ENCODE measurements at regions of chr11 and their contacts with region 1.

Region 1: GRCh38 chr11:3854977-3855807 is at the start of gene STIM1:
- DNase-seq: peak; percentile 95 to 98 (median 97)
- H3K4me3 ChIP-seq: peak within 1 kb of the TSS; percentile 84
- H3K4me3 Mint-ChIP-seq: peak within 1 kb of the TSS; percentile 91 to 99 (median 93)
- H3K27ac ChIP-seq: peak within 1 kb of the TSS; percentile 86
- H3K27ac Mint-ChIP-seq: peak within 1 kb of the TSS; percentile 98 to 100 (median 99)
- H3K4me1 ChIP-seq: peaks cover 58% of the 10 kb centered on the region
- H3K4me1 Mint-ChIP-seq: peaks cover 63 to 68% (median 66%) of the 10 kb centered on the region in 3 donors
- H3K27me3 ChIP-seq: no peaks in the 10 kb centered on the region
- H3K27me3 Mint-ChIP-seq: peaks cover 0 to 3% of the 10 kb centered on the region in 2 donors
- total RNA-seq, gene STIM1: 45.6 to 46.0 TPM

Region 2: GRCh38 chr11:3626308-3626951 is 228.8 kb before region 1 on chr11:
- CTCF ChIA-PET with region 1: no interaction called
- POLR2A ChIA-PET with region 1: no interaction called
- DNase-seq: no peak
- H3K4me3 ChIP-seq: no peak overlapping the region
- H3K4me3 Mint-ChIP-seq: no peak overlapping the region
- H3K27ac ChIP-seq: no peak overlapping the region
- H3K27ac Mint-ChIP-seq: no peak overlapping the region
- H3K4me1 ChIP-seq: no peaks in the 10 kb centered on the region
- H3K4me1 Mint-ChIP-seq: no peaks in the 10 kb centered on the region
- H3K27me3 ChIP-seq: no peaks in the 10 kb centered on the region
- H3K27me3 Mint-ChIP-seq: peaks cover 0 to 1% of the 10 kb centered on the region in 2 donors

Region 3: DNA sequence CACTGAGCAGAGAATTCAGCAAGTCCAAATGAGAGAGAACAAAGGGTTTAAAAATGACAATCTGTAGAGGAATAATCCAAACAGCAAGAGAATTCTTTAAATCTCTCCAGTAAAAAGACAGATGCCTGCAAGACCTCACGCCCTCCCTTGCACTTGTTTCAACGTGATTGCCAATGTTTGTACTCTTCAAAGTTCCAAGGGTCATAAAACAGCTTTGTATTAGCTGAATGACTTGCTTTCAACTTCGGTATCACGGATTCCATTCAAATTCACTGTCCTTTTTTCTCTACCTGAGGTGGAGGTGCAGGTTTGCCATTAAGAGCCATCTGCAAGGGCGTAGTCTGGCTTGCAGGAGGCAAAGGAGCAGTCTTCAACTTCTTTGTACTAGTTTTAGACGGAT is 142.9 kb before region 1 on chr11:
- CTCF ChIA-PET with region 1: no interaction called
- POLR2A ChIA-PET with region 1: no interaction called
- DNase-seq: no peak
- H3K4me3 ChIP-seq: no peak overlapping the region
- H3K4me3 Mint-ChIP-seq: no peak overlapping the region
- H3K27ac ChIP-seq: no peak overlapping the region
- H3K27ac Mint-ChIP-seq: peak overlapping the region in 4 of 8 donors; percentile 17 to 61 (median 42)
- H3K4me1 ChIP-seq: no peaks in the 10 kb centered on the region
- H3K4me1 Mint-ChIP-seq: peaks cover 0 to 5% (median 4%) of the 10 kb centered on the region in 3 donors
- H3K27me3 ChIP-seq: no peaks in the 10 kb centered on the region
- H3K27me3 Mint-ChIP-seq: no peaks in the 10 kb centered on the region

Region 4: GRCh38 chr11:3747684-3748083 is 107.5 kb before region 1 on chr11:
- CTCF ChIA-PET with region 1: no interaction called
- POLR2A ChIA-PET with region 1: no interaction called
- DNase-seq: no peak
- H3K4me3 ChIP-seq: no peak overlapping the region
- H3K4me3 Mint-ChIP-seq: no peak overlapping the region
- H3K27ac ChIP-seq: no peak overlapping the region
- H3K27ac Mint-ChIP-seq: peak overlapping the region in 3 of 8 donors; percentile 20 to 70 (median 50)
- H3K4me1 ChIP-seq: no peaks in the 10 kb centered on the region
- H3K4me1 Mint-ChIP-seq: peaks cover 0 to 2% (median 0%) of the 10 kb centered on the region in 3 donors
- H3K27me3 ChIP-seq: no peaks in the 10 kb centered on the region
- H3K27me3 Mint-ChIP-seq: no peaks in the 10 kb centered on the region

Region 5: GRCh38 chr11:3807909-3808860 is 47.0 kb before region 1 on chr11 and contains the start of gene PGAP2:
- CTCF ChIA-PET with region 1: interaction called, 31 read pairs
- POLR2A ChIA-PET with region 1: interaction called, 9 read pairs
- DNase-seq: peak; percentile 45 to 71 (median 54)
- H3K4me3 ChIP-seq: peak within 1 kb of the TSS; percentile 94
- H3K4me3 Mint-ChIP-seq: peak within 1 kb of the TSS; percentile 94 to 99 (median 97)
- H3K27ac ChIP-seq: peak within 1 kb of the TSS; percentile 66
- H3K27ac Mint-ChIP-seq: peak within 1 kb of the TSS; percentile 81 to 97 (median 94)
- H3K4me1 ChIP-seq: peaks cover 9% of the 10 kb centered on the region
- H3K4me1 Mint-ChIP-seq: peaks cover 14 to 16% (median 16%) of the 10 kb centered on the region in 3 donors
- H3K27me3 ChIP-seq: no peaks in the 10 kb centered on the region
- H3K27me3 Mint-ChIP-seq: no peaks in the 10 kb centered on the region
- total RNA-seq, gene PGAP2: 38.9 to 40.2 TPM

Region 6: DNA sequence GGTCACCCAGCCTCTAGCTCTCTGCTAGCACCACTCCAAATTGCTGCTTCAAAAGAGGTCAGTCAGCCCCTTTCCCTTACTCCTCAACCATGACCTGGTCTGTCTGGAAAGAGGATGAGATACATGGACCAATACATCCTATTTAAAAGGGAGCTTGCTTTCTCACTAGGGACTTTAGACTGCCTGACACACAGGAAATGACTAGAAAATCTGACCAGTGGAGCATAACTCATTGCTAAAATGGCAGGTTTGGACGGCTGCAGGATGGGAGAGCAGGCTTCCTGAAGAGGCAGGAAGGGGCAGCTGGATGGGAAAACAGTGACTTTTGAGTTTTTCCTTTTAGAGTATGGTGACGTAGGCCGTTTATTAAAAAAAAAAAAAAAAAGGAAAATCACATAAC is 25.5 kb after region 1 on chr11:
- CTCF ChIA-PET with region 1: interaction called, 40 read pairs
- POLR2A ChIA-PET with region 1: interaction called, 3 read pairs
- DNase-seq: no peak
- H3K4me3 ChIP-seq: no peak overlapping the region
- H3K4me3 Mint-ChIP-seq: peak overlapping the region in 3 of 7 donors; percentile 11 to 58 (median 35)
- H3K27ac ChIP-seq: no peak overlapping the region
- H3K27ac Mint-ChIP-seq: peak overlapping the region; percentile 47 to 93 (median 73)
- H3K4me1 ChIP-seq: peaks cover 75% of the 10 kb centered on the region
- H3K4me1 Mint-ChIP-seq: peaks cover 75 to 90% (median 85%) of the 10 kb centered on the region in 3 donors
- H3K27me3 ChIP-seq: no peaks in the 10 kb centered on the region
- H3K27me3 Mint-ChIP-seq: no peaks in the 10 kb centered on the region

Region 7: GRCh38 chr11:3914805-3915204 is 59.6 kb after region 1 on chr11:
- CTCF ChIA-PET with region 1: interaction called, 27 read pairs
- POLR2A ChIA-PET with region 1: interaction called, 4 read pairs
- DNase-seq: peak in 1 of 5 donors; percentile 38
- H3K4me3 ChIP-seq: no peak overlapping the region
- H3K4me3 Mint-ChIP-seq: peak overlapping the region in 1 of 7 donors; percentile 1
- H3K27ac ChIP-seq: no peak overlapping the region
- H3K27ac Mint-ChIP-seq: peak overlapping the region in 7 of 8 donors; percentile 18 to 86 (median 35)
- H3K4me1 ChIP-seq: peaks cover 36% of the 10 kb centered on the region
- H3K4me1 Mint-ChIP-seq: peaks cover 65 to 87% (median 85%) of the 10 kb centered on the region in 3 donors
- H3K27me3 ChIP-seq: no peaks in the 10 kb centered on the region
- H3K27me3 Mint-ChIP-seq: no peaks in the 10 kb centered on the region

Region 8: GRCh38 chr11:3959015-3959919 is 104.1 kb after region 1 on chr11:
- CTCF ChIA-PET with region 1: interaction called, 15 read pairs
- POLR2A ChIA-PET with region 1: no interaction called
- DNase-seq: no peak
- H3K4me3 ChIP-seq: no peak overlapping the region
- H3K4me3 Mint-ChIP-seq: peak overlapping the region in 1 of 7 donors; percentile 16
- H3K27ac ChIP-seq: no peak overlapping the region
- H3K27ac Mint-ChIP-seq: peak overlapping the region in 7 of 8 donors; percentile 0 to 41 (median 18)
- H3K4me1 ChIP-seq: peaks cover 66% of the 10 kb centered on the region
- H3K4me1 Mint-ChIP-seq: peaks cover 64 to 94% (median 89%) of the 10 kb centered on the region in 3 donors
- H3K27me3 ChIP-seq: no peaks in the 10 kb centered on the region
- H3K27me3 Mint-ChIP-seq: no peaks in the 10 kb centered on the region

Region 9: DNA sequence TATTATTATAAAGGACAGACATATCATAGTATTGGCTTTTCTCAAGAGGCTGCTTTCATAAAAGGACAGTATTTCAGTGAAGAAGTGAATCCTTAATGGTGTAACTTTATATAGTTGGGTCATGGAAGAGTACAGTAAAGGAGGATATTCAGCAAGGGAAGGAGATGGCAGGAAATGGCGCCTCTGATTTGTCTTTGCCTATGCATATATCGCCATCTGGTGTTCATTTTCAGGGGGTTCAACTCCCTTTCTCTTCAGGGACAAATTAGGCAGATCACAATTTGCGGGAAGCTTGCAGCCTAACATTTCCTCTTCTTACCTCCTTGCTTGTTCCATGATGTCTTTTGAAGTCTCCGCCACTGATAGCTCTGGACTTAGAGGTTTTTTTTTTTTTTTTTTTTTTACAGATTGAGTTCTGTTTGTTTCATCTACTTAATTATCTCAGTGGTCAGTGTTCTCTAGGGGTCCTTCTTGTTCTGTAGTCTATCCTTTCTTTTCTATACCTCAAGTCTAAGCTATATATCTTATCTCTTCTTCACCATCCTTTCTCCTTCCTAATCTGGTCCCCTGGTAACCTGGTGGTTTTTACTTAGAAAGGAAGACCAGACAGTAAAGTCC is 217.6 kb after region 1 on chr11:
- CTCF ChIA-PET with region 1: interaction called, 407 read pairs
- POLR2A ChIA-PET with region 1: interaction called, 20 read pairs
- DNase-seq: peak; percentile 21 to 70 (median 68)
- H3K4me3 ChIP-seq: no peak overlapping the region
- H3K4me3 Mint-ChIP-seq: no peak overlapping the region
- H3K27ac ChIP-seq: no peak overlapping the region
- H3K27ac Mint-ChIP-seq: peak overlapping the region; percentile 51 to 92 (median 83)
- H3K4me1 ChIP-seq: peaks cover 44% of the 10 kb centered on the region
- H3K4me1 Mint-ChIP-seq: peaks cover 42 to 63% (median 57%) of the 10 kb centered on the region in 3 donors
- H3K27me3 ChIP-seq: no peaks in the 10 kb centered on the region
- H3K27me3 Mint-ChIP-seq: no peaks in the 10 kb centered on the region

Measured in CD8-positive, alpha-beta memory T cell (primary cell).